ENCODE measurements at regions of chr17 and their contacts with region 1.

Region 1: GRCh38 chr17:68972119-68972704 is 17.0 kb upstream of the ABCA8 start:
- DNase-seq: peak in 2 of 4 experiments; percentile 48 to 49
- ATAC-seq: peak; percentile 72
- H3K4me3 ChIP-seq: no peak overlapping the region
- H3K27ac ChIP-seq: no peak overlapping the region
- H3K4me1 ChIP-seq: peaks cover 0 to 4% of the 10 kb centered on the region in 2 experiments; a peak in 1 of 5 replicates
- H3K27me3 ChIP-seq: no peaks in the 10 kb centered on the region
- CTCF ChIP-seq: peak; percentile 57 to 72 (median 59)
- EP300 ChIP-seq: no peak
- POLR2A ChIP-seq: no peak
- RAD21 ChIP-seq: peak; percentile 52 to 74

Region 2: GRCh38 chr17:68771867-68772515 is 200.2 kb before region 1 on chr17:
- CTCF ChIA-PET with region 1: interaction called, 3 read pairs
- POLR2A ChIA-PET with region 1: interaction called, 3 read pairs
- in situ Hi-C with region 1: loop called (anchors 5 kb)
- intact Hi-C with region 1: loop called (anchors 1 kb)
- DNase-seq: peak; percentile 14 to 58 (median 26)
- ATAC-seq: peak; percentile 74
- H3K4me3 ChIP-seq: no peak overlapping the region
- H3K27ac ChIP-seq: no peak overlapping the region
- H3K4me1 ChIP-seq: no peaks in the 10 kb centered on the region
- H3K27me3 ChIP-seq: no peaks in the 10 kb centered on the region
- CTCF ChIP-seq: peak; percentile 58 to 69 (median 64)
- EP300 ChIP-seq: no peak
- POLR2A ChIP-seq: no peak
- RAD21 ChIP-seq: peak; percentile 43 to 72; a peak in 3 of 4 replicates

Region 3: GRCh38 chr17:68777243-68777855 is 194.9 kb before region 1 on chr17:
- CTCF ChIA-PET with region 1: interaction called, 4 read pairs
- POLR2A ChIA-PET with region 1: no interaction called
- in situ Hi-C with region 1: loop called (anchors 5 kb)
- intact Hi-C with region 1: loop called (anchors 1 kb)
- DNase-seq: peak; percentile 27 to 64 (median 32)
- ATAC-seq: peak; percentile 66
- H3K4me3 ChIP-seq: no peak overlapping the region
- H3K27ac ChIP-seq: no peak overlapping the region
- H3K4me1 ChIP-seq: no peaks in the 10 kb centered on the region
- H3K27me3 ChIP-seq: no peaks in the 10 kb centered on the region
- CTCF ChIP-seq: peak; percentile 64 to 81 (median 65)
- EP300 ChIP-seq: no peak
- POLR2A ChIP-seq: no peak
- RAD21 ChIP-seq: peak; percentile 90 to 92

Region 4: GRCh38 chr17:68794636-68795434 is 177.4 kb before region 1 on chr17:
- CTCF ChIA-PET with region 1: no interaction called
- POLR2A ChIA-PET with region 1: no interaction called
- in situ Hi-C with region 1: no loop called
- intact Hi-C with region 1: loop called (anchors 1 kb)
- DNase-seq: peak in 1 of 4 experiments; percentile 7
- ATAC-seq: no peak
- H3K4me3 ChIP-seq: no peak overlapping the region
- H3K27ac ChIP-seq: no peak overlapping the region
- H3K4me1 ChIP-seq: peaks cover 0 to 13% of the 10 kb centered on the region in 2 experiments; a peak in 3 of 5 replicates
- H3K27me3 ChIP-seq: no peaks in the 10 kb centered on the region
- CTCF ChIP-seq: peak in 2 of 3 experiments; percentile 31 to 43; a peak in 3 of 6 replicates
- EP300 ChIP-seq: no peak
- POLR2A ChIP-seq: no peak
- RAD21 ChIP-seq: peak in 1 of 2 experiments; percentile 42; a peak in 3 of 4 replicates

Region 5: DNA sequence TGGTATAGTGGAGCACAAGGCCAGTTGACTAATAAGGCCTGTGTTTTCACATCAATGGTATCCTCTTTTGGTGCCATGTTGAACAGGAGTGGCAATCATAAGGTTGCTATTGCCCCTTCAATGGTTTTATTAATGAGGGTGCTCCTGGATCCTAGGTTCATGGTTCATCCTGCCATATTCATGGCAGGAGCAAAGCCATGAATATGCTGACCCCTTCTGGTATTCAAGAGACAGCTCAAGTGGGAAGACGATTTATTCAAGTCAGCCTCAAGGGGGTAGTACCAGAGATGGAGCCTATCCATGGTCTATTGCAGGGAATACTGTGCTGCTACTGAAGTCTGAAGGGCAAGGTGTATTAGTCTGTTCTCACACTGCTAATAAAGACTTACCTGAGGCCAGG is 86.0 kb after region 1 on chr17:
- CTCF ChIA-PET with region 1: no interaction called
- POLR2A ChIA-PET with region 1: no interaction called
- in situ Hi-C with region 1: no loop called
- intact Hi-C with region 1: loop called (anchors 2 kb)
- DNase-seq: peak in 2 of 4 experiments; percentile 33 to 59
- ATAC-seq: peak; percentile 95
- H3K4me3 ChIP-seq: no peak overlapping the region
- H3K27ac ChIP-seq: no peak overlapping the region
- H3K4me1 ChIP-seq: 0 out of 5 replicates have a peak, but pooled peaks cover 0 to 1% of the 10 kb centered on the region in 2 experiments
- H3K27me3 ChIP-seq: no peaks in the 10 kb centered on the region
- CTCF ChIP-seq: peak; percentile 61 to 98 (median 97)
- EP300 ChIP-seq: no peak
- POLR2A ChIP-seq: no peak
- RAD21 ChIP-seq: peak; percentile 71 to 90

Region 6: GRCh38 chr17:69235338-69235930 is 263.2 kb after region 1 on chr17:
- CTCF ChIA-PET with region 1: no interaction called
- POLR2A ChIA-PET with region 1: no interaction called
- in situ Hi-C with region 1: loop called (anchors 25 kb)
- intact Hi-C with region 1: loop called (anchors 5 kb)
- DNase-seq: peak; percentile 77 to 94 (median 81)
- ATAC-seq: peak; percentile 99
- H3K4me3 ChIP-seq: no peak overlapping the region
- H3K27ac ChIP-seq: peak overlapping the region; percentile 34; the same call in 2 of the 3 replicates
- H3K4me1 ChIP-seq: peaks cover 0 to 15% of the 10 kb centered on the region in 2 experiments; a peak in 2 of 5 replicates
- H3K27me3 ChIP-seq: no peaks in the 10 kb centered on the region
- CTCF ChIP-seq: peak; percentile 87 to 97 (median 96)
- EP300 ChIP-seq: 0 out of 2 replicates have a peak, but pooled peaks have one; percentile 11
- POLR2A ChIP-seq: no peak
- RAD21 ChIP-seq: peak; percentile 98 to 99